PC-3 (cell line): ENCODE measurements at regions of chr2 and their contacts with region 1.

Region 1: DNA sequence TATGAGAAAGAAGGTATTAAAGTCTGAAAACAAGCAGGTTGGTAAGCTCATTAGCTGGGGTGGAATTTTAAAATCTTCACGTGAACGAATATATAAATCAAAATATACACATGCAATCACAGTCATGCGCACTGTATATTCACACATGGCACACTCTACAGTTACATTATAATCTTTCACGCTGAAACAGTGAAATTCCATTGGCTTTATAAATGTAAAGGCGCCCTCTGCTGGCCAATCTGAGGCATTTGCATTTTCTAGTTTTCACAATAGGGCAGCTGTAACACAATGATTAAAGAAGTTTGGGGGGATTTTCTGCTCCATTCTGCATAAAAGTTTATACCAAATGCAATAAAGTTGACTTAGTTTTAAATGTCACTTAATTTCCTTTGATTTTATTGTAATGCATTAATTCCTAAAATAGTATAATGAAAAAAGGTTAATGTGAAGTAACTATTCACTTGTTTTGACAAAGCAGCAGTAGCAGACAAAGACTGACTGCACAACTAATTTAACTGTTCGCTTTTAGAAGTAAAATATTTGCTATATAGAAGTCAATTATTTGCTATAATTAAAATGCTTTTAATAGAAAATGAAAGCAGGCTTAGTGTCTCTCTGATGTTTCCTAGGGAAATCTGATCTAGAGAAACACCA is 17.2 kb downstream of the IFIH1 start:
- DNase-seq: peak; percentile 72
- ATAC-seq: peak; percentile 83
- H3K4me3 ChIP-seq: peak overlapping the region; percentile 33
- H3K27ac ChIP-seq: no peak overlapping the region
- H3K4me1 ChIP-seq: no peaks in the 10 kb centered on the region; the same call in 1 of the 2 replicates
- H3K27me3 ChIP-seq: no peaks in the 10 kb centered on the region
- CTCF ChIP-seq: peak; percentile 92

Region 2: GRCh38 chr2:161488879-161489278 is 812.4 kb before region 1 on chr2:
- CTCF ChIA-PET with region 1: no interaction called
- POLR2A ChIA-PET with region 1: no interaction called
- intact Hi-C with region 1: no loop called
- DNase-seq: no peak
- ATAC-seq: no peak
- H3K4me3 ChIP-seq: no peak overlapping the region
- H3K27ac ChIP-seq: no peak overlapping the region
- H3K4me1 ChIP-seq: peaks cover 27% of the 10 kb centered on the region
- H3K27me3 ChIP-seq: no peaks in the 10 kb centered on the region
- CTCF ChIP-seq: no peak

Region 3: DNA sequence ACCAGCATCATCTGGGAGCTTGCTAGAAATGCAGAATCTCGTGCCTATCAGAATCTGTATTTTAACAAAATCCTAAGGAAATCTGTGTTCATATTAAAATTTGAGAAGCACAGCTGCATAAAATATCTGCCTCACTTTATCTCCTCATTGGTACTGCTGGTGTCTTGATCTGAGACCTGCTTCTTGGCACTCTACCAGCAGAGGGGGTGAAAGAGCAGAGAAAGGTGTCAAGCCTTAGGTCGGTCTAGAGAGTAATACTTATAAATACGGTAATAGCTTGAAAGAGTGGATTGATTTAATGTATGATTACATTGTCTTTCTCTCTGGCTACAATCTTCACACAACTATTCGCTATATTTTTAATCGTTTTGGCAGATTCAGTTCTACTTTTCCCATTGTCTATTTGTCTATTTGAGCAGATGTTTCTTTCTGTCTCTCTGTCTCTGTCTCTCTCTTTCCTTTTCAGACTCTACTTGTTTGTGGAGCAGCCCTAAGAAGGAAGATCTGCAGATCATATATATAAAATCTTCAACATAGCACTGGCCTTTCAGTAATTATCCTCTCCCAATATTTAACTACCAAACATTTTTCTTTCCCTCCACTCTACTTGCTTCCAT is 147.6 kb before region 1 on chr2:
- CTCF ChIA-PET with region 1: interaction called, 15 read pairs
- POLR2A ChIA-PET with region 1: no interaction called
- intact Hi-C with region 1: loop called (anchors 1 kb)
- DNase-seq: peak; percentile 81
- ATAC-seq: peak; percentile 93
- H3K4me3 ChIP-seq: no peak overlapping the region
- H3K27ac ChIP-seq: no peak overlapping the region
- H3K4me1 ChIP-seq: no peaks in the 10 kb centered on the region
- H3K27me3 ChIP-seq: no peaks in the 10 kb centered on the region
- CTCF ChIP-seq: peak; percentile 87

Region 4: GRCh38 chr2:162221064-162221463 is 80.2 kb before region 1 on chr2:
- CTCF ChIA-PET with region 1: interaction called, 38 read pairs
- POLR2A ChIA-PET with region 1: no interaction called
- intact Hi-C with region 1: loop called (anchors 1 kb)
- DNase-seq: peak; percentile 84
- ATAC-seq: peak; percentile 92
- H3K4me3 ChIP-seq: no peak overlapping the region
- H3K27ac ChIP-seq: no peak overlapping the region
- H3K4me1 ChIP-seq: no peaks in the 10 kb centered on the region
- H3K27me3 ChIP-seq: no peaks in the 10 kb centered on the region
- CTCF ChIP-seq: peak; percentile 94

Region 5: GRCh38 chr2:162261032-162261945 is 40.0 kb before region 1 on chr2:
- CTCF ChIA-PET with region 1: interaction called, 3 read pairs
- POLR2A ChIA-PET with region 1: no interaction called
- intact Hi-C with region 1: loop called (anchors 5 kb)
- DNase-seq: peak; percentile 63
- ATAC-seq: peak; percentile 84
- H3K4me3 ChIP-seq: 0 out of 2 replicates have a peak overlapping the region, but pooled peaks have one; percentile 6
- H3K27ac ChIP-seq: peak overlapping the region; percentile 68
- H3K4me1 ChIP-seq: peaks cover 27% of the 10 kb centered on the region
- H3K27me3 ChIP-seq: no peaks in the 10 kb centered on the region
- CTCF ChIP-seq: no peak

Region 6: GRCh38 chr2:162318328-162319180 is 17.3 kb after region 1 on chr2 and contains the start of gene IFIH1:
- CTCF ChIA-PET with region 1: no interaction called
- POLR2A ChIA-PET with region 1: no interaction called
- intact Hi-C with region 1: no loop called
- DNase-seq: peak; percentile 90
- ATAC-seq: peak; percentile 87
- H3K4me3 ChIP-seq: peak within 1 kb of the TSS; percentile 89
- H3K27ac ChIP-seq: peak within 1 kb of the TSS; percentile 74
- H3K4me1 ChIP-seq: peaks cover 24% of the 10 kb centered on the region
- H3K27me3 ChIP-seq: no peaks in the 10 kb centered on the region
- CTCF ChIP-seq: peak; percentile 60
- total RNA-seq, gene IFIH1: 7.8 and 9.3 TPM in 2 replicates

Region 7: GRCh38 chr2:162333968-162334367 is 32.7 kb after region 1 on chr2:
- CTCF ChIA-PET with region 1: no interaction called
- POLR2A ChIA-PET with region 1: no interaction called
- intact Hi-C with region 1: loop called (anchors 2 kb)
- DNase-seq: peak; percentile 67
- ATAC-seq: peak; percentile 78
- H3K4me3 ChIP-seq: no peak overlapping the region
- H3K27ac ChIP-seq: no peak overlapping the region
- H3K4me1 ChIP-seq: no peaks in the 10 kb centered on the region
- H3K27me3 ChIP-seq: no peaks in the 10 kb centered on the region
- CTCF ChIP-seq: peak; percentile 65

Region 8: GRCh38 chr2:162564140-162564539 is 262.9 kb after region 1 on chr2:
- CTCF ChIA-PET with region 1: no interaction called
- POLR2A ChIA-PET with region 1: no interaction called
- intact Hi-C with region 1: no loop called
- DNase-seq: no peak
- ATAC-seq: no peak
- H3K4me3 ChIP-seq: no peak overlapping the region
- H3K27ac ChIP-seq: no peak overlapping the region
- H3K4me1 ChIP-seq: no peaks in the 10 kb centered on the region
- H3K27me3 ChIP-seq: peaks cover 23% of the 10 kb centered on the region; the same call in 1 of the 2 replicates
- CTCF ChIP-seq: no peak